Common myeloid progenitor, CD34-positive (primary cell): ENCODE measurements at regions of chr7 and their contacts with region 1.

Region 1: GRCh38 chr7:35985126-35985754 is 167.8 kb upstream of the EEPD1 start:
- DNase-seq: peak; percentile 72 to 87 (median 80)
- H3K4me3 ChIP-seq: no peak overlapping the region
- H3K27ac ChIP-seq: no peak overlapping the region
- H3K4me1 ChIP-seq: no peaks in the 10 kb centered on the region
- H3K27me3 ChIP-seq: no peaks in the 10 kb centered on the region

Region 2: DNA sequence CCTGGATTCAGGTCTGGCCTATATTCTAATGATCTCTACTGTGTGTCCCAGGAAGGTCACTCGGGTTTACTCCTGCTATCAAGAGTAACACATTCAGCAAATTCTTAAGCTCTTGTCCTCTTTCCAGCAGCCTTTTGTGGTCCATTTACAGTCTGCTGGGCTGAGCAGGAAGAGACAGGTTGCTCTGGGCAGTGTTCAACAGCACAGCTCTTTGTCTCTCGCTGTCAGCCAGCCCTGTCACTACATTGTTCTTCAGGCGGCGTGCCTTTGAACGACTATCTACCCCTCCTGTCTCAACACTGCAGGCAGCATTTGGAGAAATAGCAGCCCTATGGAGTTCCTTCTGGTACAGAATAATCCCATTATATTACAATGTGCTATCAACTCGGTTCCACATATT is 539.1 kb before region 1 on chr7:
- CTCF ChIA-PET with region 1: no interaction called
- POLR2A ChIA-PET with region 1: no interaction called
- DNase-seq: no peak
- H3K4me3 ChIP-seq: no peak overlapping the region
- H3K27ac ChIP-seq: no peak overlapping the region
- H3K4me1 ChIP-seq: no peaks in the 10 kb centered on the region
- H3K27me3 ChIP-seq: peaks cover 0 to 4% (median 2%) of the 10 kb centered on the region in 5 experiments

Region 3: DNA sequence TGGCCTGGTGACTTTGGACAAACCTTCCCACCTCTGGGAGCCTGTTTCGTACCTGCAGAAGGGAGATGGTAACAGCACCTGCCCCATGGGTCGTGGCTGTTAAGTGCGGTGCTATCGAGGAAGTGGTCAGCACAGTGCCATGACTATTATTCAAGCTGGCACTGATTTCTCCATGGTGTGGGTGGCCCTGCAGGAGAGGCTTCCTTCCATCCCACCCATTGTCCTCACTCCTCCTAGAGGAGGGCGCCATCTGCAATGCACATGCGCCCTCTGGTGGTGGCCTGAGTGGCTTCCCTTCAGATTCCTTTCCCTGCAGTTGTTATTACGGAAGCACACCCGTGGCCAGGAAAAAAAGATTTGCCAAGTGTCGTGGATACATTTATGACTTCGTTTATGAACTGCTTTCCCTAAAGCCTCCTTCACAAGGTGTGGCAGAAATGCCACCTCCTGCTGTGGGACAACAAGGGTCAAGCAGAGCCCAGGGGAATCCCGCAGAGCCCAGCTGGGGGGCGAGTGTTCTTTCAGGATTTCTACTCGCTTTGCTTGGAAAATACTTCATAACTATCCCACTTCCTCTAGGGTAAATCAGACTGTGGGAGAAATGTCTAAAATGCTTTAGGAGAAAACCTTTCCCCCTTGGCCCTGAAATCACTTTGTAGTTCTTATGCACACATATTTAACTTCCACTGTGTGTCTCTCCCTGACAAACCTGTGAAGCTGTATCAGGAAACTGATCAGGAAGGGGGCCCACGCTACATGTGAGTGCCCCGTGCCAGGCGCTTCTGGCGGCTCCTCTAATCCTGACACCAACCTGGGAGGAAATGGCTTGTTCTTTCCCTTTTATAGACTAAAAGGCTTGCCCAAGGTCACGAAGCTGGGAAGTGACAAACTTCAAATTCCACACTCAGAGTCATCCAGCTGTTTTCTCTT is 306.4 kb after region 1 on chr7:
- CTCF ChIA-PET with region 1: interaction called, 137 read pairs
- POLR2A ChIA-PET with region 1: no interaction called
- DNase-seq: peak; percentile 78 to 83 (median 81)
- H3K4me3 ChIP-seq: peak overlapping the region in 6 of 7 experiments; percentile 50 to 77 (median 68)
- H3K27ac ChIP-seq: peak overlapping the region; percentile 28 to 51
- H3K4me1 ChIP-seq: peaks cover 14 to 34% (median 29%) of the 10 kb centered on the region in 4 experiments
- H3K27me3 ChIP-seq: no peaks in the 10 kb centered on the region

Region 4: GRCh38 chr7:36303202-36304098 is 318.2 kb after region 1 on chr7:
- CTCF ChIA-PET with region 1: interaction called, 11 read pairs
- POLR2A ChIA-PET with region 1: no interaction called
- DNase-seq: peak; percentile 50 to 88 (median 83)
- H3K4me3 ChIP-seq: peak overlapping the region in 1 of 7 experiments; percentile 2
- H3K27ac ChIP-seq: peak overlapping the region; percentile 1 to 67
- H3K4me1 ChIP-seq: peaks cover 0 to 20% (median 1%) of the 10 kb centered on the region in 4 experiments
- H3K27me3 ChIP-seq: no peaks in the 10 kb centered on the region

Region 5: DNA sequence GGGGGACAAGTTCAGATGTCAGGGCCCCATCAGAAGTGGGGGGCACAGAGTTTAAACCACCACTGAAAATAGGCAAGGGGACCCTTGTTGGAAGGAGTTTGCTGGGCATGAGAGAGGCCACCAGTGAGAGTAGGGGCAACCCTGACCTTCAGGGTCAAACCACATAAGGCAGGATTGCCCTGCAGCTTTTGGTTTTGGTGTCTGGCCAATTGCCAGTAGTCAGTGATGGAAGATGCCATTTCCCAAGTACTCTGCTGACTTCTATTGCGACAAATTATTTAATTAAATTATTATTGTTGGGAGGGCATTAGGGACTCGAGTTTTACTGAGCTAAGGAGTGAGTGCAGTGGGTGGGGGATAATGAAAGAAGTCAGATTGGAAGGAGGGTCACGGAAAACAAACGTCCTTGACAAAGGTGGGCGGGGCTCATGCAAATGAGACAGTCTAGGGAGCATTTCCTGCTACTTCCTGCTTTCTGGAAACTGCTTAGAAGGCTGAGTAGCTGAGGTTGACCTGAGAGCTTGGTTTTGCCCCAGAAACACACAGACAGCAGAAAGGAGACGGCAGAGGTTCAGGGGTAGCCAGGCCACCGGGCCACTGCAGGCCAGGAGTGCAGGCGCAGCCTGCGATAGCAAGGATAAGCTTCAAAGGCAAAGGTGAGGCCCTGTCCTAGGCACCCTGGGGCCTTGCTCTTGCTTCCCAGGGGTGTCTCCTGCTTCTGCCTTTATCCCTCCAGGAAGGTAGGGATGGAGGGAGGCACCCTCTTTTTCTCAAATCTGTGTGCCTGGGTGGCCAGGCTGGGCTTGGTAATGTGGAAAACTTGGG is 330.3 kb after region 1 on chr7:
- CTCF ChIA-PET with region 1: interaction called, 52 read pairs
- POLR2A ChIA-PET with region 1: no interaction called
- DNase-seq: no peak
- H3K4me3 ChIP-seq: no peak overlapping the region
- H3K27ac ChIP-seq: no peak overlapping the region
- H3K4me1 ChIP-seq: no peaks in the 10 kb centered on the region
- H3K27me3 ChIP-seq: no peaks in the 10 kb centered on the region